CD8-positive, alpha-beta memory T cell (primary cell): ENCODE measurements at regions of chr1 and their contacts with region 1.

Region 1: GRCh38 chr1:89762779-89763648 is 57.8 kb upstream of the LRRC8D start:
- DNase-seq: peak; percentile 75 to 90 (median 82)
- H3K4me3 ChIP-seq: peak overlapping the region; percentile 80
- H3K4me3 Mint-ChIP-seq: peak overlapping the region; percentile 85 to 97 (median 88)
- H3K27ac ChIP-seq: peak overlapping the region; percentile 48
- H3K27ac Mint-ChIP-seq: peak overlapping the region; percentile 62 to 96 (median 92)
- H3K4me1 ChIP-seq: peaks cover 43% of the 10 kb centered on the region
- H3K4me1 Mint-ChIP-seq: peaks cover 46 to 55% (median 53%) of the 10 kb centered on the region in 3 donors
- H3K27me3 ChIP-seq: no peaks in the 10 kb centered on the region
- H3K27me3 Mint-ChIP-seq: no peaks in the 10 kb centered on the region

Region 2: DNA sequence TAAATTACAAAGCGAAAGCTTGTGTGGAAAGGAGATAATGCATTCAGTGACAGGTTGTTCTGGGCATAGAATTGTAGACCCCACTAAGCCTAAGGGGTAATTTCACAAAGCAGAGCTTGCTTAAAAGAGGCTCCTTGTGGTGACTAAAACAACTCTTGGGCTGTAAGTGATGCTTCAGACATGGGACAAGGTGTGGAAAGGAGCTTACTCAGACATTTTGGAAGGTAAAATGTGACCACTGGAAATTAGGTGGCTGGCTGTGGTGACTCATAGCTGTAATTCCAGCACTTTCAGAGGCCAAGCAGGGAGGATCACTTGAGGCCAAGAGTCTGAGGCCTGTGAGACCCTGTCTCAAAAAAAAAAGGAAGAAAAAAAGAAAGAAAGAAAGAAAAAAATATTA is 181.2 kb before region 1 on chr1:
- CTCF ChIA-PET with region 1: interaction called, 21 read pairs
- POLR2A ChIA-PET with region 1: no interaction called
- DNase-seq: no peak
- H3K4me3 ChIP-seq: no peak overlapping the region
- H3K4me3 Mint-ChIP-seq: no peak overlapping the region
- H3K27ac ChIP-seq: no peak overlapping the region
- H3K27ac Mint-ChIP-seq: peak overlapping the region in 2 of 8 donors; percentile 61 to 83
- H3K4me1 ChIP-seq: no peaks in the 10 kb centered on the region
- H3K4me1 Mint-ChIP-seq: peaks cover 6 to 20% (median 9%) of the 10 kb centered on the region in 3 donors
- H3K27me3 ChIP-seq: no peaks in the 10 kb centered on the region
- H3K27me3 Mint-ChIP-seq: no peaks in the 10 kb centered on the region

Region 3: GRCh38 chr1:89622895-89623294 is 140.1 kb before region 1 on chr1:
- CTCF ChIA-PET with region 1: interaction called, 44 read pairs
- POLR2A ChIA-PET with region 1: interaction called, 4 read pairs
- DNase-seq: peak in 1 of 5 donors; percentile 32
- H3K4me3 ChIP-seq: no peak overlapping the region
- H3K4me3 Mint-ChIP-seq: peak overlapping the region in 1 of 7 donors; percentile 14
- H3K27ac ChIP-seq: no peak overlapping the region
- H3K27ac Mint-ChIP-seq: peak overlapping the region in 1 of 8 donors; percentile 76
- H3K4me1 ChIP-seq: peaks cover 32% of the 10 kb centered on the region
- H3K4me1 Mint-ChIP-seq: peaks cover 35 to 75% (median 73%) of the 10 kb centered on the region in 3 donors
- H3K27me3 ChIP-seq: no peaks in the 10 kb centered on the region
- H3K27me3 Mint-ChIP-seq: no peaks in the 10 kb centered on the region

Region 4: GRCh38 chr1:89657886-89658285 is 105.1 kb before region 1 on chr1:
- CTCF ChIA-PET with region 1: interaction called, 38 read pairs
- POLR2A ChIA-PET with region 1: interaction called, 5 read pairs
- DNase-seq: peak in 3 of 5 donors; percentile 52 to 80 (median 74)
- H3K4me3 ChIP-seq: no peak overlapping the region
- H3K4me3 Mint-ChIP-seq: peak overlapping the region; percentile 40 to 85 (median 52)
- H3K27ac ChIP-seq: no peak overlapping the region
- H3K27ac Mint-ChIP-seq: peak overlapping the region; percentile 78 to 97 (median 88)
- H3K4me1 ChIP-seq: peaks cover 75% of the 10 kb centered on the region
- H3K4me1 Mint-ChIP-seq: peaks cover 91 to 100% (median 99%) of the 10 kb centered on the region in 3 donors
- H3K27me3 ChIP-seq: no peaks in the 10 kb centered on the region
- H3K27me3 Mint-ChIP-seq: no peaks in the 10 kb centered on the region

Region 5: DNA sequence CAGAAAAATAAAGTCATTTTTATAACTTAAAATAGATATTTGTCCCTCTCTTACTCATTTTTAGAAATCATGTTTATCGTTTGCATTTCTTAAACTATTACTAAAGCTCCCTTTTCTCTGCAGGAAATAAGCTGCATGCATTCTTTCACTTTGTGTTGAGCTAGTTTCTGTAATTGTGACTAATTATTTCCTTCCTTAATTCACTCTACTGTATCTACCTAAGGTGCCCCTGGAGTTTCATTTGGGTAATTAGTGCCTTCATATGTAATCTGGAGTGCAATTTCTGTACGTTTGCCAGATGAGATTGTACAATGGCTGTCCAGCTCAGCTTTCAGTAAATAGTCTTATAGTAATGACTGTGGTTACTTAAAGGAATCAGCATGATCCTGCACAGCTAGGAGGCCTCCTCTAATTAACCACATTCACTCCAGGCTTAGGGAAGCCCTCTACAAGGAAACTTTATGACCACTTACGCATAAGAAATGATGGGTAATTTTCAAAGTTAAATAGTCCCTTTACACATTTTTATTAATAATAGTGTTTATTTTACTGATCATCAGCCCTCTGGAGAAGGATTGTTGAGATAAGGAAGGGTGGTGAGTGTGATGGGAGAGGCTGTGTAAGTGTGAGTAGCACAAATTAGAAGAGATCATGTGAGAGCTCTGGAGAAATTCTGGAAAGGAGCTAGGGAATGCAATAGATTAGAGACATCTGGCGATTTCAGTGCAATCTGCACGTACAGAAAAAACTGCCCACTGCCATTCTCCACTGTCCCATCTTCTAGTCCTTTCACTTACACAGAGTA is 43.3 kb before region 1 on chr1:
- CTCF ChIA-PET with region 1: interaction called, 61 read pairs
- POLR2A ChIA-PET with region 1: interaction called, 7 read pairs
- DNase-seq: peak in 1 of 5 donors; percentile 43
- H3K4me3 ChIP-seq: no peak overlapping the region
- H3K4me3 Mint-ChIP-seq: peak overlapping the region; percentile 43 to 76 (median 68)
- H3K27ac ChIP-seq: peak overlapping the region; percentile 28
- H3K27ac Mint-ChIP-seq: peak overlapping the region; percentile 68 to 97 (median 93)
- H3K4me1 ChIP-seq: peaks cover 53% of the 10 kb centered on the region
- H3K4me1 Mint-ChIP-seq: peaks cover 77 to 94% (median 94%) of the 10 kb centered on the region in 3 donors
- H3K27me3 ChIP-seq: no peaks in the 10 kb centered on the region
- H3K27me3 Mint-ChIP-seq: no peaks in the 10 kb centered on the region